ENCODE measurements at regions of chr9 and their contacts with region 1.

Region 1: GRCh38 chr9:5562806-5563416 is 52.6 kb downstream of the PDCD1LG2 start:
- DNase-seq: no peak
- H3K4me3 ChIP-seq: no peak overlapping the region
- CTCF ChIP-seq: no peak
- POLR2A ChIP-seq: no peak

Region 2: DNA sequence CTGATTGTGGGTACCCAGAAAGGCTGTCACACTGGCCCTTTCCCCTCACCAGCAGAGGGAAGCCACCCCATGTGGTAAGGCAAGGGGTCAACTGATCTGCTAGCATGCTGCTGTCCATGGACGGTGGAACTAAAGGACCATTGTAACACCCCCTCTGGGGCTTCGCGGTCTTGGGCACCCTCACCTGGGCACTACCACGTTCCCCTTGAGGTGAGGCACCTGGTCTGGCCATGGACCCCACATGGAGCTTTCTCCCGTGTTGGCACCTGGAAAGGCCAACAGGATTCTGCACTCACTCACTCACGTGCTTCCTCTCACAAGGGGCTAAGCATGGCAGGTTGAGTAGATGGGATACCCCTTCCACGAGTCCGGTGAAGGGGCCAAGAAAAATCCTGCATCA is 1965.1 kb before region 1 on chr9:
- intact Hi-C with region 1: loop called (anchors 5 kb)
- DNase-seq: no peak
- H3K4me3 ChIP-seq: no peak overlapping the region
- CTCF ChIP-seq: no peak
- POLR2A ChIP-seq: no peak